ENCODE measurements at regions of chr15 and their contacts with region 1.

Region 1: DNA sequence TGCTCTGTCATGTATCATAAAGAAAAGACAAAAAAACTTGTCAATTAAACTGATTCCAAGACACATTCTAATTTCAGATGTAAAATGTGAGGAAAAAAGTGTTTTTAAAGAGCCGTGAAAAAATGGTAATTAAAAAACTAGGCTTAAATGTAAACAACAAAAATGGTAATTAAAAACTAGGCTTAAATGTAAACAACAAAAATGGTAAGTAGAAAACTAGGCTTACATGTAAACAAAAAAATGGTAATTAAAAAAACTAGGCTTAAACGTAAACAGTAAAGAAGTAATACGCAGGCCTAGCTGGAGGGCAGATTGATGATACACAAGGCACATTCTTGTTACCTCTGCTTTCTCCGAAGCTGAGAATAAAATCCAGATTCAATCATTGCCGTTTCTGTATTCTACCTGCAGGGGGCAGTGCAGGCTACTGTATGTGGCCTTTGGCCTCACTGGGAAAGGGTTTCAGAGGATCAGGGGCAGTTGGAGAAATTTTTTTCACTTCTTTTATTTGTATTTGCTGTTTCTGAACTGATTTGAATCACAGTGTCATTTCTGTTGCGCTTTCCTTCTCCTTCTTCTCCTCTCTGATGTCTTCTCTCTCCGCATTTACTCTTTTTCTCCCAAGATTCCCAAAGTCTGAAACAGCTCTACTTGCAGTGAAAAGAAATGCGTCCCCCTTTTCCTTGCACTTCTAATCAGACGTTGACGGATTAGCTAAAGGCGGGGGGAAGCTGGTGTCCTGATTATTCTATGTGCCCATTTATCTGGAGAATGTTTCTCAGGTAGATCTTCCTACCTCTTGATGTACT is 67.2 kb upstream of the MCTP2 start:
- DNase-seq: peak; percentile 81
- H3K4me3 ChIP-seq: no peak overlapping the region
- H3K27ac ChIP-seq: no peak overlapping the region
- H3K4me1 ChIP-seq: peaks cover 12% of the 10 kb centered on the region
- CTCF ChIP-seq: peak; percentile 99

Region 2: GRCh38 chr15:94230956-94231722 is 66.9 kb after region 1 on chr15 and contains the start of gene MCTP2:
- CTCF ChIA-PET with region 1: no interaction called
- POLR2A ChIA-PET with region 1: interaction called, 9 read pairs
- intact Hi-C with region 1: loop called (anchors 2 kb)
- DNase-seq: peak; percentile 95
- H3K4me3 ChIP-seq: peak within 1 kb of the TSS; percentile 86
- H3K27ac ChIP-seq: peak within 1 kb of the TSS; percentile 81
- H3K4me1 ChIP-seq: peaks cover 60% of the 10 kb centered on the region
- CTCF ChIP-seq: peak; percentile 60
- total RNA-seq, gene MCTP2: 73.2 and 75.0 TPM in 2 replicates

Region 3: GRCh38 chr15:94478763-94479162 is 314.6 kb after region 1 on chr15:
- CTCF ChIA-PET with region 1: no interaction called
- POLR2A ChIA-PET with region 1: interaction called, 3 read pairs
- intact Hi-C with region 1: loop called (anchors 10 kb)
- DNase-seq: peak; percentile 93
- H3K4me3 ChIP-seq: peak overlapping the region; percentile 27
- H3K27ac ChIP-seq: peak overlapping the region; percentile 67
- H3K4me1 ChIP-seq: peaks cover 32% of the 10 kb centered on the region
- CTCF ChIP-seq: peak; percentile 66

Region 4: GRCh38 chr15:94494732-94495131 is 330.5 kb after region 1 on chr15:
- CTCF ChIA-PET with region 1: no interaction called
- POLR2A ChIA-PET with region 1: no interaction called
- intact Hi-C with region 1: loop called (anchors 2 kb)
- DNase-seq: no peak
- H3K4me3 ChIP-seq: no peak overlapping the region
- H3K27ac ChIP-seq: no peak overlapping the region
- H3K4me1 ChIP-seq: peaks cover 10% of the 10 kb centered on the region
- CTCF ChIP-seq: no peak

Region 5: GRCh38 chr15:94576889-94577533 is 412.8 kb after region 1 on chr15:
- CTCF ChIA-PET with region 1: no interaction called
- POLR2A ChIA-PET with region 1: no interaction called
- intact Hi-C with region 1: loop called (anchors 1 kb)
- DNase-seq: peak; percentile 64
- H3K4me3 ChIP-seq: no peak overlapping the region
- H3K27ac ChIP-seq: no peak overlapping the region
- H3K4me1 ChIP-seq: no peaks in the 10 kb centered on the region
- CTCF ChIP-seq: peak; percentile 89

Measured in OCI-LY7 (cell line).